ENCODE measurements at regions of chr12 and their contacts with region 1.

Region 1: GRCh38 chr12:110600254-110600653 is 13.7 kb upstream of the TCTN1 start:
- DNase-seq: no peak
- H3K4me3 Mint-ChIP-seq: no peak overlapping the region
- H3K27ac Mint-ChIP-seq: peak overlapping the region; percentile 16
- H3K4me1 Mint-ChIP-seq: peaks cover 4% of the 10 kb centered on the region
- H3K27me3 Mint-ChIP-seq: no peaks in the 10 kb centered on the region

Region 2: GRCh38 chr12:110449799-110450497 is 150.3 kb before region 1 on chr12 and contains the start of gene ARPC3:
- CTCF ChIA-PET with region 1: interaction called, 85 read pairs
- POLR2A ChIA-PET with region 1: no interaction called
- intact Hi-C with region 1: loop called (anchors 1 kb)
- DNase-seq: peak; percentile 97
- H3K4me3 Mint-ChIP-seq: peak within 1 kb of the TSS; percentile 100
- H3K27ac Mint-ChIP-seq: peak within 1 kb of the TSS; percentile 99
- H3K4me1 Mint-ChIP-seq: peaks cover 35% of the 10 kb centered on the region
- H3K27me3 Mint-ChIP-seq: no peaks in the 10 kb centered on the region
- total RNA-seq, gene ARPC3: 340 to 352 TPM

Region 3: DNA sequence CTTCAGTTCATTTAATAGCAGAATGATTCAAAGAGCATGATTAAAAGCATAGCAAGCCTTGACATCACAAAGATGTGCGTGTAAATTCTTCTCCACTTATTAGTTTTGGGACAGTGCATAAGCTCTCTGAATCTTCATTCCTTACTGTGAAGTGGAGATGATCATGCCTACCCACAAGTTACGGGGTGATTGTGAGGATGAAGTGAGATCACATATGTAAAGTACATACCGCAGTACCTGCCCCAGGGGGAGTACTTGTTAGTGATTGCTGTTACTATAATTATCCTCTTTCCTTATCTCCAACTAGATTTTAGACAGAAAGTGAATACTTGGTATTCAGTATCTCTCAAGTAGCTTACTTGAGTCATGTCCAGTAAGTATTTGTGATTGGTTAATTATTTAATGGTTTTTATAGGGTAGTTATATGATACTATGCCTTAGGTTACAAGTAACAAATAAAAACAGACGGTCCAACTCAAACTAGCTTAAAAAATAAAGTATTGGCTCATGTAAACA is 92.1 kb before region 1 on chr12:
- CTCF ChIA-PET with region 1: interaction called, 189 read pairs
- POLR2A ChIA-PET with region 1: no interaction called
- intact Hi-C with region 1: loop called (anchors 1 kb)
- DNase-seq: no peak
- H3K4me3 Mint-ChIP-seq: no peak overlapping the region
- H3K27ac Mint-ChIP-seq: no peak overlapping the region
- H3K4me1 Mint-ChIP-seq: peaks cover 2% of the 10 kb centered on the region
- H3K27me3 Mint-ChIP-seq: no peaks in the 10 kb centered on the region

Region 4: GRCh38 chr12:110538869-110539622 is 61.2 kb before region 1 on chr12:
- CTCF ChIA-PET with region 1: interaction called, 20 read pairs
- POLR2A ChIA-PET with region 1: no interaction called
- intact Hi-C with region 1: no loop called
- DNase-seq: no peak
- H3K4me3 Mint-ChIP-seq: no peak overlapping the region
- H3K27ac Mint-ChIP-seq: no peak overlapping the region
- H3K4me1 Mint-ChIP-seq: peaks cover 46% of the 10 kb centered on the region
- H3K27me3 Mint-ChIP-seq: no peaks in the 10 kb centered on the region

Region 5: DNA sequence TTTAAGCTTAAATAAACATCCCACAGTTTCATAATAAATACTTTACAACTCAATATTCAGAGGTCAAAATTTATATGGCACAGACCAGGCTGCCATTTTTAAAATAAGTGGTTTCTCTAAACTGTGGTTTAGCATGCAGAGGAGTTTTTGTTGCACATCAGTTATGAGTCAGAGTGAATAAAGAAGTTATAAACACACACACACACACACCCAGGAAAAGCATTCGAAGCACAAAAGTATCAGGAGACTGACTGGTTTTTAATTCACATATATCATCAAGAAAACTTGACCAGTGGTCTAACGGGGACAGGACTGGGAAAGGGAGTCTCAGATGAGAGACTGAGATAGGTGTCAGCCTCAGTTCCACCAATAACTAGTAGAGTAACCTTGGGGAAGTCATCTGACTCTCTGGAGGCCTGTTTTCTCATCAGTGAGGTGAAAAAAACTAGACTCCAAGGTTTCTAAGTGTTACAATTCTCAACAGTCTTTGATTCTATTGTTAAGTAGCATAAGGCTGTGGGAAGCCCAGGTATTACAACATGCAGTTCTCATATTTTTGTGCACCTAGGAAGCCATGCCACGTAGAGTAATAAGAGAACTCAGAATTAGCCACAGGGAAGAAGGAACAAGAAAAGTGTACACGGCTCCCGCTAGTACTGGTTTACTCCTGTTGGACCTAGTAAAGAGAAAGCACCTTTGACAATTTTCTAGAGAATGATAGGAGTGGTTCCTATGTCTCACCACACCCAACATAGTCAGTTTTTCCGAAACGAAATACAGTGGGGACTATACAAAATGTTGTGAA is 22.3 kb before region 1 on chr12:
- CTCF ChIA-PET with region 1: interaction called, 21 read pairs
- POLR2A ChIA-PET with region 1: no interaction called
- intact Hi-C with region 1: no loop called
- DNase-seq: peak; percentile 64
- H3K4me3 Mint-ChIP-seq: peak overlapping the region; percentile 94
- H3K27ac Mint-ChIP-seq: peak overlapping the region; percentile 98
- H3K4me1 Mint-ChIP-seq: peaks cover 77% of the 10 kb centered on the region
- H3K27me3 Mint-ChIP-seq: no peaks in the 10 kb centered on the region

Region 6: DNA sequence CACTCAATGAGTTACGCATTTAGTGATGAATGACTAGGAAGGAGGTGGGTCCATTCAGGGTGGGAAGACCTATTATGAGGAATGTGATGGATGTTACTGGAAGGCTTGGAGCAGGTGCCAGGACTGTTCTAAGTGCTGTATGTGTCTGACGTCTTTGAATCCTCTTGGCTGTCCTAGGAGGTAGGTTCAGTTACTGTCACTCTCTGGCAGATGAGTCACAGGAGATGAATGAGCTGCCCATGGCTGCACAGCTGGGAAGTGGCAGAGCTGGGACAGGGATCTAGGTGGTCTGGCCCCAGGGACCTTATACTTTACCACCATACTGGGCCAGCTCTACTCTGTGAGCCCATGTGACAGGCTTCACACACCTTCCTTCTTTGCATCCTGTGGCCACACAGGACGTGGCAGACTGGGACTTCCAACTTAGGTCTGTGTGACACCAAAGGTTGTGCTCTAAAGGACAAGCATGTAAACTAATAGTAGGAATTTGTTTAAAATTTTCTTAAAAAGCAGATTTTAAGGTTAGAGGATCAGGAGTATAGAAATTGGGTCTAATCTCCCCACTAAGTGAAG is 37.7 kb after region 1 on chr12:
- CTCF ChIA-PET with region 1: no interaction called
- POLR2A ChIA-PET with region 1: no interaction called
- intact Hi-C with region 1: no loop called
- DNase-seq: no peak
- H3K4me3 Mint-ChIP-seq: no peak overlapping the region
- H3K27ac Mint-ChIP-seq: no peak overlapping the region
- H3K4me1 Mint-ChIP-seq: peaks cover 14% of the 10 kb centered on the region
- H3K27me3 Mint-ChIP-seq: no peaks in the 10 kb centered on the region

Region 7: DNA sequence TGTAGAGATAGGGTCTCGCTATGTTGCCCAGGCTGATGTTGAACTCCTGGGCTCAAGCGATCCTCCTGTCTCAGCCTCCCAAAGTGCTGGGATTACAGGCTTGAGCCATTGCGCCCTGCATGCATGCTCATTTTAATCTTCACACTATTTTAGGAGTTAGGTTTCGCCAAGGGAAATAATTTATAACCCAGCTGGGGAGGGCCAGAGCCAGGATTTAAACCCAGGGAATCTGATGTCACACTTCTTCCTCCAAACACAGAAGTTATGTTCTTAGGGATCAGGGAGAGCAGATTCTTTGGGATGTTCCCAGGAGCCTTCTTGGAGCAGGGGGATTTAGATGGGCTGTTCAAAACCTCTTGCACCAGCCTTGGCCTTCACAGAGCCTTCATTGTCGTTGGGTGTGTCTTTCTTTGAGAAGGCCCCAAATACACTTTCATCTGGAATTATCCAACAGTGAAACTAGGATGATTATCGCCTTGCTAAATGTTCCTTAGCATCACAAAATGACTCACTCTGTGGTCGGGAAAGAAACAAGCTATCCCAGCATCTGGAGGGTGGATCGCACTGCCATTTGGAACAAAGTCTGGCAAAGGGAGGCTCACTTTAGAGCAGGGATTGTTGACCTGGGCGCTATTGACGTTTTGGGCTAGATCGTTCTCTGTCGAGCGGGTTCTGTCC is 150.7 kb after region 1 on chr12:
- CTCF ChIA-PET with region 1: no interaction called
- POLR2A ChIA-PET with region 1: no interaction called
- intact Hi-C with region 1: no loop called
- DNase-seq: no peak
- H3K4me3 Mint-ChIP-seq: no peak overlapping the region
- H3K27ac Mint-ChIP-seq: no peak overlapping the region
- H3K4me1 Mint-ChIP-seq: no peaks in the 10 kb centered on the region
- H3K27me3 Mint-ChIP-seq: no peaks in the 10 kb centered on the region

Region 8: DNA sequence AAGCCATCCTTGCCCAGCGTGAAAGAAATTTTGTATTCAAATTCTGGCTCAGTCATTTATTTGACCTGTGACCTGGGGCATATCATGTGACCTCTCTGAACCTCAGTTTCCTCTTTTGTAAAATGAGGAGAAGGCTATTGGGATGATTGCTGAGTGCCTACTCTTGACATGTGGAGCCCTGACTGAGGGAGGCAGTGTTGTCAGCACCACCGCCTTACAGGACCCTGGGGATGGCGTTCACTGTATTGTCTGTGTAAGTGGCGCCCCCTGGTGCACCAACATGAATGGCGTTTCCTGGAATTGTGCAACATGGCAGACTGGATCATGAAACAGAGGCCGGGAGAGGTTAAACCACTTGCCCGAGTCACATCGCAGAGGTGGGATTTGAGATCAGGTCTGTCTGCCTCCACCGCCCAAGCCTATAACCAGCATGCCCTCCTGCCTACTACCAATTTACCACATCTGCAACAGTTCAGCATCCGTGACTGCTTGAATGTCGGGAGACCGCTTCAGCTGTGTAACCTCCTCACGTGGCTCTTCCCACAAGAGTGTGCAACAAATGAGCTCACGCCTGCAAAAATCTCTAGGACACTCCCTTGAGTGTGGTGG is 226.4 kb after region 1 on chr12:
- CTCF ChIA-PET with region 1: interaction called, 30 read pairs
- POLR2A ChIA-PET with region 1: no interaction called
- intact Hi-C with region 1: no loop called
- DNase-seq: peak; percentile 94
- H3K4me3 Mint-ChIP-seq: no peak overlapping the region
- H3K27ac Mint-ChIP-seq: no peak overlapping the region
- H3K4me1 Mint-ChIP-seq: peaks cover 14% of the 10 kb centered on the region
- H3K27me3 Mint-ChIP-seq: peaks cover 4% of the 10 kb centered on the region

Region 9: GRCh38 chr12:110940933-110941332 is 340.7 kb after region 1 on chr12:
- CTCF ChIA-PET with region 1: no interaction called
- POLR2A ChIA-PET with region 1: no interaction called
- intact Hi-C with region 1: no loop called
- DNase-seq: no peak
- H3K4me3 Mint-ChIP-seq: no peak overlapping the region
- H3K27ac Mint-ChIP-seq: no peak overlapping the region
- H3K4me1 Mint-ChIP-seq: peaks cover 6% of the 10 kb centered on the region
- H3K27me3 Mint-ChIP-seq: peaks cover 14% of the 10 kb centered on the region